ENCODE measurements at regions of chr12 and their contacts with region 1.

Region 1: DNA sequence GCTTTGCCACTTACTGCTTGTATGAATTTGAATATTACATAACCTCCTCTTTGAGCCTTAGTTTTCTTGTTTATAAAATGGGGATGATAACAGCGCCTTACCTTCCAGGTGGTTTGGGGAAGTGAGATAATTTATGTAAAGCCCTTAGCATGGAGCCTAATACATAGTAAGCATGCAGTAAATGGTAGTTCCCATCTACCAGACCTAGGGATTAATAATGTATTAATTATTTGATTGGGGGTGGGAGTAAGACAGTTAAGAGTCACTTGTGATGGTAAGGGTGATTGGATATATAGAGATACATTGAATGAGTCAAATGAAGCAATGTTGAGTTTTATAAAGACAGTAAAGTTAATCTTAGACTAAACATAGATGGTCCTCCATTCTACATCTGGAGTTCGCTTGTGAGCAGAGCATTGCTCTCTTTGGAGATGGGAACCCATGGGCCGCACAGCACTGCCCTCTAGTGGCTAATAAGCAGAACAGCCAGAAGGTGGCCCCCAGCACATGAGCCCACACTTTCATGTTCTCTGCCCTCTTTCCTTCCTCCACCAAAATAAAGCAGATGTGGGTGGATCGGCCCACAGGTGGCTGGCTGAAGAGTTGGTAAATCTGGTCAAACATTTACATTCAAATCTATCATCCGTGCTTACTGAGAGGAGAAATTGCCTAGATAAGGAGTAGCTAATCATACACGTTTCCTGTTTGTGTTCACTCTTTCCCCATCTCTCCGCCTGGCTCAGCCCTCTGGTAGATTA is 26.5 kb upstream of the TAMALIN start:
- DNase-seq: peak; percentile 55 to 74
- ATAC-seq: peak; percentile 84 to 96 (median 92)
- H3K4me3 ChIP-seq: no peak overlapping the region
- H3K27ac ChIP-seq: no peak overlapping the region
- H3K4me1 ChIP-seq: no peaks in the 10 kb centered on the region
- H3K27me3 ChIP-seq: no peaks in the 10 kb centered on the region
- CTCF ChIP-seq: peak; percentile 98

Region 2: GRCh38 chr12:51891843-51892242 is 88.4 kb before region 1 on chr12:
- intact Hi-C with region 1: loop called (anchors 2 to 5 kb)
- DNase-seq: no peak
- ATAC-seq: no peak
- H3K4me3 ChIP-seq: no peak overlapping the region
- H3K27ac ChIP-seq: no peak overlapping the region
- H3K4me1 ChIP-seq: no peaks in the 10 kb centered on the region
- H3K27me3 ChIP-seq: peaks cover 0 to 18% (median 0%) of the 10 kb centered on the region in 3 donors
- CTCF ChIP-seq: peak; percentile 34

Region 3: DNA sequence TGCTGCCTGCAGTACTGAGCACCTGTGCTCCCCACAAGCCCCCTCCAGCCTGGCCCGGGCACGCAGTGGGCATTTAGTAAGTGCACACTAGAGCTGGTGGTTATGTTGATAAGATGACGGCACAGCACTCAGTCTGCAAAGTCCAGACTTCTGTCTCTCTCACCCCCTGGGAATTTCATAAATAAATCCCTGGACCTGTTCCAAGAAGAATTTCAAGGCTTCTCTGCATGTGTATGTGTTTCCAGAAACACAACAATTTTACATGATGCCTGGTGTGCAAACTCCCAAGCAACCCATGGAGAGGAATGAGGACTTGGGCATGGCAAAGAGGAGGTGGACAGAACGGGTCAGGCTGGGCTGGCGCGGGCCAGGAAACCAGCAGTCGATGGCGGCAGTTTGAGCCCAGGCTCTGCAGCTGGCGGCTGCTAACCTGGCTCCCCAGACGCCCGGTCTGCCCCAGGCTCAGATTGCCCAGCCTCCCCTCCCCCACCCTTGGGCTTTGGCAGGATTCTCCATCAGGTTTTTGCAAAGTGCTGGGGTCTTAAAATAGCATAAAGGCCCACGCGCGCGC is 39.1 kb before region 1 on chr12:
- intact Hi-C with region 1: loop called in 1 of 2 experiments (anchors 5 kb)
- DNase-seq: no peak
- ATAC-seq: peak in 3 of 4 donors; percentile 47 to 67 (median 60)
- H3K4me3 ChIP-seq: peak overlapping the region; percentile 30
- H3K27ac ChIP-seq: no peak overlapping the region
- H3K4me1 ChIP-seq: peaks cover 9% of the 10 kb centered on the region
- H3K27me3 ChIP-seq: no peaks in the 10 kb centered on the region
- CTCF ChIP-seq: no peak